Activated T-helper 2 cell treated with anti-CD3 and anti-CD28 coated beads, Interferon-gamma antibody, Interleukin-2, Interleukin-4, amounts not matched to agents 10 μg/mL and 5 μg/mL and 100 μg/mL, durations not matched to agents 14 hours and 24 hours and 36 hours (primary cell): ENCODE measurements at regions of chr11 and their contacts with region 1.

Region 1: GRCh38 chr11:75142714-75143419 is 8.0 kb upstream of the SLCO2B1 start:
- DNase-seq: peak; percentile 75
- H3K4me3 Mint-ChIP-seq: peak overlapping the region; percentile 39
- H3K27ac Mint-ChIP-seq: peak overlapping the region; percentile 72
- H3K4me1 Mint-ChIP-seq: peaks cover 27% of the 10 kb centered on the region
- H3K27me3 Mint-ChIP-seq: peaks cover 12% of the 10 kb centered on the region

Region 2: GRCh38 chr11:74929431-74930363 is 213.2 kb before region 1 on chr11:
- intact Hi-C with region 1: loop called (anchors 1 kb)
- DNase-seq: peak; percentile 45
- H3K4me3 Mint-ChIP-seq: no peak overlapping the region
- H3K27ac Mint-ChIP-seq: no peak overlapping the region
- H3K4me1 Mint-ChIP-seq: peaks cover 39% of the 10 kb centered on the region
- H3K27me3 Mint-ChIP-seq: no peaks in the 10 kb centered on the region

Region 3: GRCh38 chr11:75022759-75023396 is 120.0 kb before region 1 on chr11:
- intact Hi-C with region 1: loop called (anchors 2 kb)
- DNase-seq: peak; percentile 60
- H3K4me3 Mint-ChIP-seq: no peak overlapping the region
- H3K27ac Mint-ChIP-seq: no peak overlapping the region
- H3K4me1 Mint-ChIP-seq: peaks cover 1% of the 10 kb centered on the region
- H3K27me3 Mint-ChIP-seq: no peaks in the 10 kb centered on the region

Region 4: DNA sequence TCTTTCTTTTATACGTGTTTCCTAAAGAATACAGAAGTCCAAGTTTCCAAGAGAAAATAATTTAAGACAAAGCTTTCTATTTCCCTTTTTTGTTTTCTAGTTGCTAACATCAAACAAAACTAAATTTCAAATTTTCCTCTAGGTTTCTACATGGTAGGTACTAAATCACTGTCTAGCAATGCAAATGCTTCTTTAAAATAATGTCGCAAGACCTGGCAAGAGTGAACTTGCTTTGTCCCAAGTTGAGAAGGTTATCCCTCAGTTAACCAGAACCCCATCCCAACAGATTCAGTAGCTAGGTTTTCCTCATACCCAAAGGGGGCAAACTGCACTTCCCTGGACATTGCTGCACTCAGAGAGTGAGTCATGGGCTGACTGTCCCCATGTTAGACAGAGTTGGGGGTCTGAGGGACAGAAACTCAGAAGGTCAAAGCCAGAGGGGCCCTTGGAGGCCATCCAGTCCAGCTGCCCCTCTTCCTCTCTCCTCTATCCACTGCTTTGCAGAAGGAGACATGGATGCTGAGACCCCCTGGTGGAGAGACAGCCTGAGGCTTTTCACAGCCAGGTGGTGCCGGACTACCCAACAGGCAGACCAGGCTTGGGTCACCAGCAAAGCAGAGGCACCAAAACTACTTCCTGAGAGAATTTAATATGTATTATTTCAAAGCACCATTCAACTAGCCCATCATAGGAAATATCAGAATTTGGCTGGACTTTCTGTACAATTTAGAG is 69.2 kb before region 1 on chr11:
- intact Hi-C with region 1: no loop called
- DNase-seq: no peak
- H3K4me3 Mint-ChIP-seq: no peak overlapping the region
- H3K27ac Mint-ChIP-seq: no peak overlapping the region
- H3K4me1 Mint-ChIP-seq: peaks cover 4% of the 10 kb centered on the region
- H3K27me3 Mint-ChIP-seq: peaks cover 27% of the 10 kb centered on the region

Region 5: DNA sequence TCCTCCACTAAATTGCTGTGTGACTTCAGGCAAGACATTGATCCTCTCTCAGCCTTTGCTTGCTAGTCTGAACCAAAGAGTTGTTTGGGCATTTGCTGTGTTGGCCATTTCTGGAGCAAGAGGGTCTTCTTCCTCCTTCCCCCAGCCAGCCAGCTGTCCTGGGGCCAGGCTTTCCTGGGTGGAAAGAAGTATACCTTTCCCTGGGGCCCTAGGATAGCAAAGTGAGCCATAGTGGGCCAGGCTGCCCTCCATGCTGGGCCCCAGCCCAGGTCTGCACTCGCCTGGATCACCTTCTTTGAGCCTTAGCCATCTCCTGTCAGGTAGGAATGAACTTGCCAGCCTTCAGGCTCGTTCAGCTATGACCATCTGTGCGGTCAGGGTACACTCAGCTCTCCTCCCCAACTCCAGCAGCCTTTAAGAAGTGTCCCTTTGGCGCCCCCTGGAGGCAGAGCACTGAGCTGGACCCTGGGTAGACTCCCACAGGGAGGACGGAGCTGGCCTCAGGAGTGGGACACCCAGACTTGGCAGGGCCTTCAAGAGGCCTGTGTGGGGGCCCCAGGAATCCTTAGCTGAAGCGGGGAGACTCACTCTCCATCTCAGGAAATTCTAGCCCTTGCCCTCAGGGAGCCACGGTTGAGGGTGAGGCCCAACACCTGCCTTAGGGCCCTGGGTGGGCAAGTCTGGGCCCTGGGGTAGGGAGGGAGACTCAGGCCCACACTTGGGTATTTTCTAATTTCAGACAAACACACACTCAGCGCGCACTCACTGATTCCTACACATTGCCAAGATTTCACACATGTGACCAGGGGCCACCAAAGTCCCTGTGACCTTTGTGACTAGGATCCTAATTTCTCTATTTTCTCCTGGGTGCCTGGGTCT is 62.1 kb after region 1 on chr11:
- intact Hi-C with region 1: loop called (anchors 1 kb)
- DNase-seq: peak; percentile 67
- H3K4me3 Mint-ChIP-seq: no peak overlapping the region
- H3K27ac Mint-ChIP-seq: no peak overlapping the region
- H3K4me1 Mint-ChIP-seq: no peaks in the 10 kb centered on the region
- H3K27me3 Mint-ChIP-seq: peaks cover 16% of the 10 kb centered on the region

Region 6: GRCh38 chr11:75241036-75241905 is 98.4 kb after region 1 on chr11:
- intact Hi-C with region 1: loop called (anchors 1 kb)
- DNase-seq: peak; percentile 86
- H3K4me3 Mint-ChIP-seq: peak overlapping the region; percentile 62
- H3K27ac Mint-ChIP-seq: no peak overlapping the region
- H3K4me1 Mint-ChIP-seq: peaks cover 4% of the 10 kb centered on the region
- H3K27me3 Mint-ChIP-seq: peaks cover 55% of the 10 kb centered on the region

Region 7: GRCh38 chr11:75248690-75249268 is 105.9 kb after region 1 on chr11:
- intact Hi-C with region 1: loop called (anchors 1 kb)
- DNase-seq: peak; percentile 78
- H3K4me3 Mint-ChIP-seq: no peak overlapping the region
- H3K27ac Mint-ChIP-seq: no peak overlapping the region
- H3K4me1 Mint-ChIP-seq: no peaks in the 10 kb centered on the region
- H3K27me3 Mint-ChIP-seq: peaks cover 20% of the 10 kb centered on the region

Region 8: DNA sequence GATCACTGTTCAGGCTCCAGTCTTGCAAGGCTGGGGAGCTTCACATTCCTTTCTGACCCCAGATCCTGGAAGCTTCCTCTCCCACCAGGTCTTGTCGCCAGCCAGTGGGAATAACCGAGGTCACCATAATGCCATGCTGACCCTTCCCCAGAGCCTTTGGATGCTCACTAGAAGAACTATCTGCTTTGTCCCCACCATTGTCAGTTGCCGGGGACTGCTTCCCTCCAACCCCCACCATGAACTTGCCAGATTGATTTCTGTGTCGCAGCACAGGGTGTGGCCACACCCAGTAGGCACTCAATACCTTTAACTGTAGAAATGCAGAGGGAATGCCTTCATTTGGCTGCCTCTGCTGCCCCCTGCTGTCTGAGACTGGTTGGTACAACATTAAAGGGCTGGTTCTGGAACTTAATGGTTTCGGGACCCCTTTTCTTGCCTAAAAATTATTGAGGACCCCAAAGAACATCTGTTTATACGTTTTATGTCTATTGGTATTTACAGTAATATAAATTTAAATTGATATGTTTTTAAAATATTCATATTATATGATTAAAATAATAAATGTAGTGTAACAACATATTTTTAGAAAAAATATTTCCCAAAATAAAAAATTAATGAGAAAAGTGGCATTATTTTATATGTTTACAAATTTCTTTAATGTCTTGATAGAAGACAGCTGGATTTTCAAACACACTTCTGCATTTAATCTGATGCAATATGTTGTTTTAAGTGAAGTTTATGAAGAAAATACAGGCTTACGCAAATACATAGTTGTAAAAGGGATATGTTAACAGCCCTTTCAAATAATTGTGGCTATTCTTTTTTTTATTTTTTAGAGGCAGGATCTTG is 389.6 kb after region 1 on chr11:
- intact Hi-C with region 1: loop called (anchors 10 kb)
- DNase-seq: peak; percentile 72
- H3K4me3 Mint-ChIP-seq: no peak overlapping the region
- H3K27ac Mint-ChIP-seq: no peak overlapping the region
- H3K4me1 Mint-ChIP-seq: peaks cover 28% of the 10 kb centered on the region
- H3K27me3 Mint-ChIP-seq: no peaks in the 10 kb centered on the region

Region 9: GRCh38 chr11:75721855-75722668 is 579.2 kb after region 1 on chr11:
- intact Hi-C with region 1: no loop called
- DNase-seq: no peak
- H3K4me3 Mint-ChIP-seq: no peak overlapping the region
- H3K27ac Mint-ChIP-seq: no peak overlapping the region
- H3K4me1 Mint-ChIP-seq: no peaks in the 10 kb centered on the region
- H3K27me3 Mint-ChIP-seq: peaks cover 2% of the 10 kb centered on the region